Activated T-helper 2 cell treated with anti-CD3 and anti-CD28 coated beads, Interferon-gamma antibody, Interleukin-2, Interleukin-4, amounts not matched to agents 10 μg/mL and 5 μg/mL and 100 μg/mL, durations not matched to agents 14 hours and 24 hours and 36 hours (primary cell): ENCODE measurements at regions of chr1 and their contacts with region 1.

Region 1: GRCh38 chr1:107474877-107475612 is 334.2 kb downstream of the NTNG1 start:
- DNase-seq: no peak
- H3K4me3 Mint-ChIP-seq: no peak overlapping the region
- H3K27ac Mint-ChIP-seq: no peak overlapping the region
- H3K4me1 Mint-ChIP-seq: peaks cover 7% of the 10 kb centered on the region
- H3K27me3 Mint-ChIP-seq: peaks cover 47% of the 10 kb centered on the region

Region 2: DNA sequence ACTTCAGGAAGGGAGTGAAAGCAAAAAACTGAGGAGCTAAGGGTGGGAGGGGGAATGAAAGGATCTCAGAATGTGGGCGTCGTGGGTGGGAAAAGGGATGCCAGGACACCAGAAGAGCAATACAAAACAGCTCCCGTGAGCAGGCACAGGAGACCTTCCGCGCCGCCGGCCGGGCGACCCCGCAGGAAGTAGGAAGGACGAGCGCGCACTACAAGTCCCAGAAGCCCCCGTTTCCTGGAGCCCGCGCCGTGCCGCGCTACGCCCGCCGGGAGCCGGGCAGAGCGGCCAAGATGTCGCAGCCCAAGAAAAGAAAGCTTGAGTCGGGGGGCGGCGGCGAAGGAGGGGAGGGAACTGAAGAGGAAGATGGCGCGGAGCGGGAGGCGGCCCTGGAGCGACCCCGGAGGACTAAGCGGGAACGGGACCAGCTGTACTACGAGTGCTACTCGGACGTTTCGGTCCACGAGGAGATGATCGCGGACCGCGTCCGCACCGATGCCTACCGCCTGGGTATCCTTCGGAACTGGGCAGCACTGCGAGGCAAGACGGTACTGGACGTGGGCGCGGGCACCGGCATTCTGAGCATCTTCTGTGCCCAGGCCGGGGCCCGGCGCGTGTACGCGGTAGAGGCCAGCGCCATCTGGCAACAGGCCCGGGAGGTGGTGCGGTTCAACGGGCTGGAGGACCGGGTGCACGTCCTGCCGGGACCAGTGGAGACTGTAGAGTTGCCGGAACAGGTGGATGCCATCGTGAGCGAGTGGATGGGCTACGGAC is 418.4 kb before region 1 on chr1 and contains the start of gene PRMT6:
- intact Hi-C with region 1: loop called (anchors 5 kb)
- DNase-seq: peak; percentile 79
- H3K4me3 Mint-ChIP-seq: peak within 1 kb of the TSS; percentile 99
- H3K27ac Mint-ChIP-seq: peak within 1 kb of the TSS; percentile 98
- H3K4me1 Mint-ChIP-seq: peaks cover 19% of the 10 kb centered on the region
- H3K27me3 Mint-ChIP-seq: peaks cover 1% of the 10 kb centered on the region
- total RNA-seq, gene PRMT6: 20.4 and 21.0 TPM in 2 replicates

Region 3: DNA sequence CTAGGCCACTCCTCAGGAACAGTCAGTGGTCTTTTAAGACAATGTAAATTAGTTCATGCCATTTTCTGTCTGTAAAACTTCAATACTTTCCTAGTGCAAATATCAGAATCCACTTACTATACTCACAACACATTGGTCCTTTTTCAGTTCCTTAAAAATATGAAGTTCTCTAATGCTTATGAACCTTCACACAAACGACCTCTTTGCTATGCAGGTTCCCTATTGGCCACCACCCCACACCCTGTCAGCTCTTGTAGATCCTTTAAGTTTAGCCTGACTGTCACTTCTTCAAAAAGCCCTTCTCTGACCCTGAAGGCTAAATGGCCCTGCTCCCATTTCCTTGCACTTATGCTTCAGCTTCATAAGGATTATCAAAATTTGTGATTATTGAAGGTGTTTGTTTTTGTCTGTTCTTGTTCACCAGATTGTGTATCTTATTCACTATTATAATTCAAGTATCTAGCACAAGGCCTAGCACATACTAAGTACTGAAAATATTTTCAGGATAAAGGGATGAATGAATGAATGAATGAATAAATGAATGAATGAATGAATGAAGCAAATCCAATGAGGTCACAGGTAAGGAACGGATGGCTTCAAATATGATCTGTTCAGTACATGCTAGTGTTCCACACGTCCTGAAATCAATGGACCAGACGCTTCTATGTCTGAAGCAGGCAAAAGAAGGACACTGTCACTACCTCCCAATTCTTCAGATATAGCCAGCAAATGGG is 116.0 kb after region 1 on chr1:
- intact Hi-C with region 1: loop called (anchors 10 kb)
- DNase-seq: no peak
- H3K4me3 Mint-ChIP-seq: no peak overlapping the region
- H3K27ac Mint-ChIP-seq: no peak overlapping the region
- H3K4me1 Mint-ChIP-seq: peaks cover 12% of the 10 kb centered on the region
- H3K27me3 Mint-ChIP-seq: no peaks in the 10 kb centered on the region

Region 4: GRCh38 chr1:107604825-107605224 is 129.8 kb after region 1 on chr1:
- intact Hi-C with region 1: no loop called
- DNase-seq: no peak
- H3K4me3 Mint-ChIP-seq: no peak overlapping the region
- H3K27ac Mint-ChIP-seq: no peak overlapping the region
- H3K4me1 Mint-ChIP-seq: no peaks in the 10 kb centered on the region
- H3K27me3 Mint-ChIP-seq: peaks cover 2% of the 10 kb centered on the region

Region 5: GRCh38 chr1:107622966-107623365 is 147.9 kb after region 1 on chr1:
- intact Hi-C with region 1: loop called (anchors 1 kb)
- DNase-seq: no peak
- H3K4me3 Mint-ChIP-seq: no peak overlapping the region
- H3K27ac Mint-ChIP-seq: no peak overlapping the region
- H3K4me1 Mint-ChIP-seq: peaks cover 8% of the 10 kb centered on the region
- H3K27me3 Mint-ChIP-seq: peaks cover 17% of the 10 kb centered on the region